Activated B cell treated with CpG ODN at 0.5 μM for 24 hours (primary cell): ENCODE measurements at regions of chr1 and their contacts with region 1.

Region 1: DNA sequence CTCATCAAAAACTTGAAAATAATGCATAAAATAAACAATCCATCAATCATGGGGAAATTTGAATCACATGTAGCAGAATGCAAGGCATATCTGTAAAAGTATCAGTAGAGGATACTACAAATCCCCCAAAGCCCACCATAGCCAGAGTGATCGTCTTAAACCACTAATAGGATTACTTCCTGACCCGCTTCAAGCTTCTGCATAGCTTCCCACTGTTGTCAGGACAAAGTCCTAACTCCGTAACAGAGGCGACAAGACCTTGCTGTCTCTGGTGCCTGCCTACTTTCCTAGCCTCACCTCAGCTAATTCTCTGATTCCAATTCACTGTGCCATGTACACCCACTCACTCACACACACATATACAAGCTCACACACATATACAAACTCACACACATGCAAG is 161.2 kb upstream of the NFIA start:
- DNase-seq: no peak
- ATAC-seq: no peak
- H3K4me3 Mint-ChIP-seq: no peak overlapping the region
- H3K27ac Mint-ChIP-seq: no peak overlapping the region
- H3K4me1 Mint-ChIP-seq: no peaks in the 10 kb centered on the region
- H3K27me3 Mint-ChIP-seq: no peaks in the 10 kb centered on the region
- CTCF ChIP-seq: no peak

Region 2: DNA sequence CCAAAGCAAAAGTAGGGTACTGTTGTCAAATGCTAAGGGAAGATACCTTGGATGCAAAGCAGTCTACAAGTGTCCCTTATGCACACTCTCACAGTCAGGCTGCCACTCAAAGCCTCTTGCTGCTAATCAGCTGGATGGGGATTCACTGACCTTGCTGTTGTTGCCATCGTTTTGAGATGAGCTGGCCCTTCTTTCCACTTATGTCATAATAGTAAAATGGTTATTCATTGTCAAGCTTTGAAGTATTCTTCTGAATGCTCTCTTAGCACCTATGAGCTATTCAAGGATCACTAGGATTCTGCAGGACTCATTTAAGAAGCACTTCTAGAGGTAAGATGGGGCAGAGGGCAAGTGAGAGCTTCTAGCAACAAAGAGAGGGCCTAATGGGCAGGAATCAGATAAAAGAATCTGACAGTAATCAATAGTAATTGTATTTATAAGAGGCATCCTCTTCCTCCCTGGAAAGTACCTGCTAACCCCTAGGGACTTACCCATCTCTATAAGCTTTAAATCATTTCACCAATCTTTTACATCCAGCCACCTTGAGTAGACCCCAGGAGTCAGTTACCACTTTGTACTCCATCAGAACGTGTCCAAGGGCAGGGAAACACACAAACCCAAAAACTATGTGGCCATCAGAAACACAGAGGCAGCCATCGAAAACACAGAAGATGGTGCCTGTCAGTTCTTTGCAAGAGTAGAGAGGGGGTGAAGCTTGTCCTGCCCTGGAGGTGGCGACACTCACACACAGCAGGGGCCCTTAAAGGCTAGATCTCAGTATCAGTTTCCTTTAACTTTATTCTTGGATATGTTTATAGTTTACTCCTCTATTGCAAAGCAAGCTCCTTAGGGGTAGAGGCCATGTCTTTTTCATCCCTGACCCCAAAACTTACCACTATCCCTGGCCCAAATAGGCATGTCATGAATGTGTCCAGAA is 57.5 kb after region 1 on chr1:
- CTCF ChIA-PET with region 1: no interaction called
- POLR2A ChIA-PET with region 1: no interaction called
- intact Hi-C with region 1: no loop called
- DNase-seq: no peak
- ATAC-seq: no peak
- H3K4me3 Mint-ChIP-seq: no peak overlapping the region
- H3K27ac Mint-ChIP-seq: no peak overlapping the region
- H3K4me1 Mint-ChIP-seq: peaks cover 7% of the 10 kb centered on the region
- H3K27me3 Mint-ChIP-seq: peaks cover 1% of the 10 kb centered on the region
- CTCF ChIP-seq: no peak

Region 3: GRCh38 chr1:61157468-61157987 is 236.4 kb after region 1 on chr1:
- CTCF ChIA-PET with region 1: no interaction called
- POLR2A ChIA-PET with region 1: no interaction called
- intact Hi-C with region 1: no loop called
- DNase-seq: no peak
- ATAC-seq: no peak
- H3K4me3 Mint-ChIP-seq: no peak overlapping the region
- H3K27ac Mint-ChIP-seq: no peak overlapping the region
- H3K4me1 Mint-ChIP-seq: no peaks in the 10 kb centered on the region
- H3K27me3 Mint-ChIP-seq: peaks cover 3% of the 10 kb centered on the region
- CTCF ChIP-seq: no peak

Region 4: GRCh38 chr1:61784726-61785125 is 863.6 kb after region 1 on chr1:
- CTCF ChIA-PET with region 1: no interaction called
- POLR2A ChIA-PET with region 1: interaction called, 13 read pairs
- intact Hi-C with region 1: no loop called
- DNase-seq: no peak
- ATAC-seq: no peak
- H3K4me3 Mint-ChIP-seq: no peak overlapping the region
- H3K27ac Mint-ChIP-seq: no peak overlapping the region
- H3K4me1 Mint-ChIP-seq: no peaks in the 10 kb centered on the region
- H3K27me3 Mint-ChIP-seq: no peaks in the 10 kb centered on the region
- CTCF ChIP-seq: no peak